Activated CD8-positive, alpha-beta T cell treated with anti-CD3 and anti-CD28 coated beads for 36 hours (primary cell): ENCODE measurements at regions of chr7 and their contacts with region 1.

Region 1: DNA sequence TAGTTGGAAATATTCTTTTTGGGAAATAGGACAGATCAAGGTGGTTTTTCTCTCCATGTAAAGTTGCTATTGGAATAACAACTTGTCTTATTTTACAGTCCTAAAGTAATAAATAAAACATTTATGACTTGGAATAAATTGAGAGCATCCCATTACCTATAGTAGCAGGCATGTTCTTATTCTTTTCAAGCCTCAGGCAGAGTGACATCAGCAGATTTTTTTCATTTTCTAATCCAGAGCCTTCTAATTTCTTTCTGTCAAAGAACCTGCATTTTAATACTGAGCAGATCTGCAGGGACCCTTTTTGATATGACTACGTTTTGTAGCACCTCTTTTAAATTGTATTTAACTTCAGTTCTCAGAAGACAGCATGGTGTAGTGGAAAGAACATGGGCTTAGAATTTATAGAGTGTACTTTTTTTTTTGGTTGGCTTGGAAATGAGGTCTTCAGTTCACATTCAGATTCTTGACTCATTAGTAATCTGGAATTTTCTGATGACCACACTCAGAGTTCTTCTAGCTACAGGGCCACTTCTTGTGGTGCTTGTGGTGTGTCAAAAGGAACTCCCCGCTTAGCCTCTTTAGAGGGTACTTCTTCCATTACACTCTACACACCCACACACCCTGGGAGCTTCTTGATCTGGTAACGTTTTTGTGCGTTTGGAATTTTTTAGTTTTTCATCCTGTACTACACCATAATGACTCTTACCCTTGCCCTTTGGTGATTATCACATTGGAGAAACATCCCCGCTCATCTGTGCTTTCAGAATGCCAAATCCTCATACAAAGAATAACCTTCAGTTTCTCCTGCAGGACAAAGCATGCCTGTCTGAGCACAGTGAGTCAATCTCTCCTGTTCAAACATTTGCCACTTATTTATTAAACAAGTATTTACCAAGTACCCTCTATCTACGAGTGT is 34.6 kb downstream of the AGK start:
- DNase-seq: peak; percentile 89
- ATAC-seq: peak; percentile 83
- H3K4me3 Mint-ChIP-seq: peak overlapping the region; percentile 40
- H3K27ac Mint-ChIP-seq: peak overlapping the region; percentile 85
- H3K4me1 Mint-ChIP-seq: peaks cover 71% of the 10 kb centered on the region
- H3K27me3 Mint-ChIP-seq: no peaks in the 10 kb centered on the region
- CTCF ChIP-seq: no peak

Region 2: DNA sequence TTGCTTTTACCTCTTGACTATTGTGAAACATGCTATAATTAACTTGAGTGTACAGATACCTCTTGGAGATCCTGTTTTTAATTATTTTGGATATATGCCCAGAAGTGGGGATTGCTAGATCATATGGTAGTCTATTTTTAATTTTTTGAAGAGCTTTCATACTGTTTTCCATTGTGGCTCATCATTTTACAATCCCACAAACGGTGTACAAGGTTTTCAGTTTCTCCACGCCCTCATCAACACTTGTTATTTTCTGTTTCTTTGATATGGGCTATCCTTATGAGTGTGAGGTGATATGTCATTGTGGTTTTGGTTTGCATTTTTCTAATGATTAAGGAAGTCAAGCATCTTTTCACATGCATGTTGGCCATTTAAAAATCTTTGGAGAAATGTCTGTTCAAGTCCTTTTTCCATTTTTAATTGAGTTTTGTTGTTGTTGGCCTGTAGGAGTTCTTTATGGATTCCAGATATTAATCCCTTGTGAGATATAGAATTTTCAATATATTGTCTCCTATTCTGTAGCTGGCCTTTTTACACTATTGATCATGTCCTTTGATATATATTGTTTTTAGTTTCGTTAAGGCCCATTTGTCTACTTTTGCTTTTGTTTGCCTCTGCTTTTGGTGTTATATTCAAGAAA is 27.2 kb before region 1 on chr7:
- CTCF ChIA-PET with region 1: interaction called, 5 read pairs
- POLR2A ChIA-PET with region 1: interaction called, 13 read pairs
- intact Hi-C with region 1: loop called (anchors 2 kb)
- DNase-seq: peak; percentile 32
- ATAC-seq: peak; percentile 89
- H3K4me3 Mint-ChIP-seq: peak overlapping the region; percentile 28
- H3K27ac Mint-ChIP-seq: peak overlapping the region; percentile 84
- H3K4me1 Mint-ChIP-seq: peaks cover 78% of the 10 kb centered on the region
- H3K27me3 Mint-ChIP-seq: no peaks in the 10 kb centered on the region
- CTCF ChIP-seq: no peak